Naive thymus-derived CD4-positive, alpha-beta T cell (primary cell): ENCODE measurements at regions of chr14 and their contacts with region 1.

Region 1: GRCh38 chr14:106872611-106873446 is 1346.4 kb downstream of the TMEM121 start:
- DNase-seq: peak; percentile 75 to 88 (median 83)
- ATAC-seq: peak; percentile 90
- H3K4me3 ChIP-seq: peak overlapping the region; percentile 49
- H3K4me3 Mint-ChIP-seq: peak overlapping the region in 9 of 10 donors; percentile 45 to 80 (median 65)
- H3K27ac ChIP-seq: no peak overlapping the region
- H3K27ac Mint-ChIP-seq: peak overlapping the region in 4 of 9 donors; percentile 29 to 52 (median 40)
- H3K4me1 ChIP-seq: peaks cover 4 to 6% of the 10 kb centered on the region in 2 donors
- H3K4me1 Mint-ChIP-seq: peaks cover 12 to 26% (median 13%) of the 10 kb centered on the region in 7 donors
- H3K27me3 ChIP-seq: peaks cover 0 to 13% of the 10 kb centered on the region in 2 donors
- H3K27me3 Mint-ChIP-seq: peaks cover 27 to 40% (median 32%) of the 10 kb centered on the region in 5 donors

Region 2: GRCh38 chr14:105537369-105538164 is 1335.3 kb before region 1 on chr14:
- CTCF ChIA-PET with region 1: no interaction called
- POLR2A ChIA-PET with region 1: no interaction called
- intact Hi-C with region 1: no loop called
- DNase-seq: peak; percentile 36 to 80 (median 62)
- ATAC-seq: peak; percentile 86
- H3K4me3 ChIP-seq: no peak overlapping the region
- H3K4me3 Mint-ChIP-seq: no peak overlapping the region
- H3K27ac ChIP-seq: no peak overlapping the region
- H3K27ac Mint-ChIP-seq: no peak overlapping the region
- H3K4me1 ChIP-seq: peaks cover 0 to 6% of the 10 kb centered on the region in 2 donors
- H3K4me1 Mint-ChIP-seq: peaks cover 0 to 7% (median 3%) of the 10 kb centered on the region in 7 donors
- H3K27me3 ChIP-seq: no peaks in the 10 kb centered on the region
- H3K27me3 Mint-ChIP-seq: peaks cover 0 to 39% (median 9%) of the 10 kb centered on the region in 5 donors

Region 3: DNA sequence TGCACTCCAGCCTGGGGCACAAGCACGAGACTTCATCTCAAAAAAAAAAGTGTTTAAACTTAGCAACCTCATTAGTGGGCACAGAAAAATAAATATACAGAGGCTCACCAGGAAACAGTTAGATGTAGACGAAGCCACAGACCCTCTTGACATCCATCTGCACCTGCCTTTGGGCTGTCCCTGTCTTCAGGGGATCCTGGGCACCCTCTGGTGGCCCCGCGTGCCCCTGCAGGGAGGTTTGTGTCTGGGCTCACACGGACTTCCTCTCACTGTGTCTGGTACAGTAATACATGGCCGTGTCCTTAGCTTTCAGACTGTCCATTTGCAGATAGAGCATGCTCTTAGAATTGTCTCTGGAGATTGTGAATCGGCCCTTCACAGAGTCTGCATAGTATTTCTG is 430.0 kb before region 1 on chr14:
- CTCF ChIA-PET with region 1: no interaction called
- POLR2A ChIA-PET with region 1: no interaction called
- intact Hi-C with region 1: no loop called
- DNase-seq: peak in 8 of 9 donors; percentile 16 to 59 (median 40)
- ATAC-seq: peak; percentile 84
- H3K4me3 ChIP-seq: no peak overlapping the region
- H3K4me3 Mint-ChIP-seq: peak overlapping the region in 3 of 10 donors; percentile 7 to 33 (median 8)
- H3K27ac ChIP-seq: no peak overlapping the region
- H3K27ac Mint-ChIP-seq: no peak overlapping the region
- H3K4me1 ChIP-seq: no peaks in the 10 kb centered on the region
- H3K4me1 Mint-ChIP-seq: peaks cover 0 to 7% (median 0%) of the 10 kb centered on the region in 7 donors
- H3K27me3 ChIP-seq: no peaks in the 10 kb centered on the region
- H3K27me3 Mint-ChIP-seq: peaks cover 6 to 53% (median 22%) of the 10 kb centered on the region in 5 donors

Region 4: DNA sequence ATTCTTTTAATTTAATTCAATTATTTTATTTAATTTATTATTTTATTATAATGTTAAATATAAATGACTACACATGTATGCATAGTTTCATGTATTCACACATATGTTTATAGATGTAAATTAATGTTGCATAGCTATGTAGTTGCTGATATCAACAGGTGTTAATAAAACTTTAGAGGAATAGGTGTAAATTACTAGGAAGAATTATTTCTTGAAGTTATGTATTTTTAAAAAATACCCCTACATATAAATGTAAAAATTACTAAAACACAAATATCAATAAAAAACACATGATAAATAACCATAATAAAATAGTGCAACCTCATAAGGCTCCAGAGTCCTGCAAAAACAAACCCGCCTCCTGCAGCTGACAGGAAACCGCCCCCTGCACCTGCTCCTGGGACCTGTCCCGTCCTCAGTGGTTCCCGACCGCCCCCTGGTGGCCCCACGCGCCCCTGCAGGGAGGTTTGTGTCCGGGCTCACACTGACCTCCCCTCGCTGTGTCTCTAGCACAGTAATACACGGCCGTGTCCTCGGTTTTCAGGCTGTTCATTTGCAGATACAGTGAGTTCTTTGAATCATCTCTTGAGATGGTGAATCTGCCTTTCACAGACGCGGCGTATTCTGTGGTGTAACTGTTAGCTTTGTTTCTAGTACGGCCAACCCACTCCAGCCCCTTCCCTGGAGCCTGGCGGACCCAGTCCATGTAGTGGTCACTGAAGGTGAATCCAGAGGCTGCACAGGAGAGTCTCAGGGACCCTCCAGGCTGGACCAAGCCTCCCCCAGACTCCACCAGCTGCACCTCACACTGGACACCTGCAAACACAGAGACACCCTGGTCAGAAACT is 82.4 kb before region 1 on chr14:
- CTCF ChIA-PET with region 1: interaction called, 13 read pairs
- POLR2A ChIA-PET with region 1: no interaction called
- intact Hi-C with region 1: no loop called
- DNase-seq: peak; percentile 36 to 81 (median 60)
- ATAC-seq: peak; percentile 84
- H3K4me3 ChIP-seq: no peak overlapping the region
- H3K4me3 Mint-ChIP-seq: peak overlapping the region in 5 of 10 donors; percentile 13 to 48 (median 35)
- H3K27ac ChIP-seq: no peak overlapping the region
- H3K27ac Mint-ChIP-seq: no peak overlapping the region
- H3K4me1 ChIP-seq: peaks cover 0 to 5% of the 10 kb centered on the region in 2 donors
- H3K4me1 Mint-ChIP-seq: peaks cover 6 to 25% (median 23%) of the 10 kb centered on the region in 7 donors
- H3K27me3 ChIP-seq: no peaks in the 10 kb centered on the region
- H3K27me3 Mint-ChIP-seq: peaks cover 4 to 51% (median 21%) of the 10 kb centered on the region in 5 donors

Region 5: GRCh38 chr14:106837870-106838269 is 35.0 kb before region 1 on chr14:
- CTCF ChIA-PET with region 1: interaction called, 35 read pairs
- POLR2A ChIA-PET with region 1: interaction called, 6 read pairs
- intact Hi-C with region 1: no loop called
- DNase-seq: no peak
- ATAC-seq: no peak
- H3K4me3 ChIP-seq: no peak overlapping the region
- H3K4me3 Mint-ChIP-seq: no peak overlapping the region
- H3K27ac ChIP-seq: no peak overlapping the region
- H3K27ac Mint-ChIP-seq: no peak overlapping the region
- H3K4me1 ChIP-seq: no peaks in the 10 kb centered on the region
- H3K4me1 Mint-ChIP-seq: peaks cover 3 to 20% (median 10%) of the 10 kb centered on the region in 7 donors
- H3K27me3 ChIP-seq: no peaks in the 10 kb centered on the region
- H3K27me3 Mint-ChIP-seq: peaks cover 0 to 38% (median 0%) of the 10 kb centered on the region in 5 donors

Region 6: DNA sequence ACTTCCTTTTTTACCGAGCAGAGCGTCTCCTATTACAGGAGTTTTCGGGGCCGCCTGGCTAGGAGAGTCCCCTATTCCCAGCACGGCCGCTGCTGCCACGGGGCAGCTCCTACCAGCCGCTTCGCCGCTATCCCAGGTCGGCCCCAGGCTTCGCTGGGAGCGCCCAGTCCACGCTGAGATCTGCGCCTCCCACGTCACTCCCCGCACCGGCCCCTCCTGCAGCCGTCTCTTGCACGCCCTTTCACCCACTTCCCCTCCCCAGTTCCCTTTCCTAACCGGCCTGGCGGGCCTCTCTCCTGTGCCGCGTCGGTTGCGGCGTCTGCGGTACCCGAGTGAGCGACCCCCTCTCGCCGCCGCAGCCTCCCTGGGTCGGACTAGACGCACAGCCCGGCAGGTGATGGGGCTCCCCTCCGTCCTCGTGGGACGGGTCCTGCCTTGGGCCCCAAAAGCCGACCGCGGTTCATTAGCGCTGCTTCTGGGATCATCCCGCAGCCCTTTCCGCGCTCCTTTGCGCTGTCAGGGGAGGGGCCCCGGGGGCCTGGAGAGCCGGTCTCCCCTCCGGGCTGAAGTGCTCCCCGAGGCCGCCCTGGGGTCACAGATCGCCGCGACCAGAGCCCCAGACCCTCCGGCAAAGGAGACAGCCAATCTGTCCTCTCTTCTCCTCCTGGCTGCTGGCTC is 28.1 kb before region 1 on chr14:
- CTCF ChIA-PET with region 1: interaction called, 35 read pairs
- POLR2A ChIA-PET with region 1: interaction called, 6 read pairs
- intact Hi-C with region 1: loop called (anchors 1 to 2 kb)
- DNase-seq: peak; percentile 49 to 78 (median 70)
- ATAC-seq: peak; percentile 89
- H3K4me3 ChIP-seq: peak overlapping the region; percentile 92
- H3K4me3 Mint-ChIP-seq: peak overlapping the region; percentile 81 to 99 (median 96)
- H3K27ac ChIP-seq: peak overlapping the region; percentile 85
- H3K27ac Mint-ChIP-seq: peak overlapping the region; percentile 74 to 98 (median 96)
- H3K4me1 ChIP-seq: peaks cover 0 to 3% of the 10 kb centered on the region in 2 donors
- H3K4me1 Mint-ChIP-seq: peaks cover 27 to 56% (median 37%) of the 10 kb centered on the region in 7 donors
- H3K27me3 ChIP-seq: no peaks in the 10 kb centered on the region
- H3K27me3 Mint-ChIP-seq: peaks cover 0 to 33% (median 0%) of the 10 kb centered on the region in 5 donors